ENCODE measurements at regions of chr4 and their contacts with region 1.

Region 1: GRCh38 chr4:72326692-72327632 is 242.1 kb downstream of the ADAMTS3 start:
- DNase-seq: no peak
- ATAC-seq: peak; percentile 47; the same call in 1 of the 2 replicates
- H3K4me3 Mint-ChIP-seq: no peak overlapping the region
- H3K27ac Mint-ChIP-seq: no peak overlapping the region
- H3K4me1 Mint-ChIP-seq: peaks cover 8% of the 10 kb centered on the region
- H3K27me3 Mint-ChIP-seq: no peaks in the 10 kb centered on the region
- CTCF ChIP-seq: peak; percentile 51

Region 2: GRCh38 chr4:72312032-72312650 is 14.8 kb before region 1 on chr4:
- CTCF ChIA-PET with region 1: interaction called, 15 read pairs
- POLR2A ChIA-PET with region 1: no interaction called
- DNase-seq: peak; percentile 25
- ATAC-seq: peak; percentile 99
- H3K4me3 Mint-ChIP-seq: no peak overlapping the region
- H3K27ac Mint-ChIP-seq: 0 out of 2 replicates have a peak overlapping the region, but pooled peaks have one; percentile 47
- H3K4me1 Mint-ChIP-seq: peaks cover 18% of the 10 kb centered on the region
- H3K27me3 Mint-ChIP-seq: no peaks in the 10 kb centered on the region
- CTCF ChIP-seq: no peak

Region 3: DNA sequence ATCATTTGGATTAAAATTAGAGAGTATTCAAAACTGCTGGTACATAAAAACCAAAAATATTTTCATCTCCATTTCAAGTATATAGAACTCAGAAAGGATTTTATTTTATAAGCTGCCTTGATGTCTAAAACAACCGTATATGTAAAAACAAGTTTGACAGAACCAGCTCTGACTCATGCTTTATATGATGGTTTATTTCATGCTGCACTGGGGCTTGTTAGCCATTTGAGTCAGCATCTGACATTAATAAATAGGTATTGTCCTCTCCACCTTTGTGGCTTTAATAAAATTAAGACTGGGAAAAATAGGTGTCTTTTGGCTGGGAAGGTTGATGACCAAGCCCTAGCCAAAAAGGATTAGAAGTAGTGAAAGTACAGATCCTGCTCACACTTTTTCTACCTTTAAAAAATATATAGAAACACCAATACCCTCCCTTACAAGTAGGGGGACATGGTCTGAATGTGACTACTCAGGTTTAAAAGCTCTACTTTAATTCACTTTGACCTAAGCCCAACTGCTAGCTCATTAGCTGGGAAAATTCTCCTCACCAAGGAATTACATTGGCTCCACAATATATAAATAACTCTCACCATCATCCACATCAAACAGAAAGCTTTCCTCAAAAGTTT is 14.0 kb after region 1 on chr4:
- CTCF ChIA-PET with region 1: interaction called, 28 read pairs
- POLR2A ChIA-PET with region 1: no interaction called
- DNase-seq: no peak
- ATAC-seq: peak; percentile 63
- H3K4me3 Mint-ChIP-seq: no peak overlapping the region
- H3K27ac Mint-ChIP-seq: no peak overlapping the region
- H3K4me1 Mint-ChIP-seq: no peaks in the 10 kb centered on the region
- H3K27me3 Mint-ChIP-seq: no peaks in the 10 kb centered on the region
- CTCF ChIP-seq: peak; percentile 12; the same call in 1 of the 2 replicates